A549 (cell line): ENCODE measurements at regions of chr11 and their contacts with region 1.

Region 1: GRCh38 chr11:61332797-61333549 is at the starts of genes DDB1 and TKFC:
- DNase-seq: peak; percentile 91 to 94
- ATAC-seq: peak; percentile 91 to 96
- H3K4me3 ChIP-seq: peak within 1 kb of the TSS; percentile 96
- H3K27ac ChIP-seq: peak within 1 kb of the TSS; percentile 93 to 96
- H3K4me1 ChIP-seq: peaks cover 35% of the 10 kb centered on the region
- CTCF ChIP-seq: no peak
- EP300 ChIP-seq: no peak
- POLR2A ChIP-seq: peak; percentile 88
- RAD21 ChIP-seq: no peak
- polyA plus RNA-seq, gene DDB1: 213 and 222 TPM in 2 replicates
- polyA plus RNA-seq, gene TKFC: 46.5 and 51.2 TPM in 2 replicates

Region 2: DNA sequence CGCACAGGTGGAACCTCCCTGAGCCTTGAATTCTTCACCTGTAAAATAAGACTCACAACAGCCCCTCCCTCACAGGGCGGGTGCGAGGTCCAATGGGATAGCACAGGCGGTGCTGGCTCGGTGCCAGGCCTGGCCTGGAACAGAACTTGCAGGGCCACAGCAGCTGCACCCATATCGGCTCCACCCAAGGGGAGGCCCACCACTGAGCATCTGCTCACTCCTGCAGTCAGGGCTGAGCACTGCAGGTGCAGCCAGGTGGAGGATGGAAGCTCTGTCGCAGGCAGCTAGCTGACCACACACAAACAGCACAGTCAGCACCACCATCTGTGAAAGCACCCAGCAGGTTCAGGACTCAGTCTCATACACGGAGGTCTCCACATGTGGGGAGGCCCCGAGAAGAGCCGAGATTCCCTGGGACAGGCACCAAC is 191.4 kb before region 1 on chr11:
- CTCF ChIA-PET with region 1: no interaction called
- POLR2A ChIA-PET with region 1: no interaction called
- DNase-seq: no peak
- ATAC-seq: peak; percentile 37 to 55; a peak in 4 of 6 replicates
- H3K4me3 ChIP-seq: no peak overlapping the region
- H3K27ac ChIP-seq: no peak overlapping the region
- H3K4me1 ChIP-seq: no peaks in the 10 kb centered on the region
- CTCF ChIP-seq: no peak
- EP300 ChIP-seq: no peak
- POLR2A ChIP-seq: no peak
- RAD21 ChIP-seq: no peak

Region 3: DNA sequence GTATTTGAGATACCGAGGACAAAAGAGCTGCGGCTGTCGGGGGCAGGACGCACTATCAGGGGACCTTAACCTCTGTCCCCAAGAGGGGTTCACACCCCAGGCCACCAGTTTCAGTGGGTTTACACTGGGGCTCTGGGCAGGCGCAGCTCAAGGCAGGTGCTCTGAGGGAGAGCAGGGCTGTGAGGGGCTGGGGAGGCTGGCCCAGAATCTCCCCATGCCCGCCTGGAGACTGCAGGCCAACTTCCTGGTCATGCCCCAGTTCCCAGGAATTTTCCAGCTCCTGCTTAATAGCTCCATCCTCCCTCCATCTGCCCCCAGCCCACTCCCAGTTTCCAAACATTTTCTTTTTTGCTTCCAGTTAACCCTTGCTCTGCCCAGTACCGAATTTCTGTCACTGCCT is 137.3 kb before region 1 on chr11:
- CTCF ChIA-PET with region 1: no interaction called
- POLR2A ChIA-PET with region 1: no interaction called
- DNase-seq: no peak
- ATAC-seq: peak; percentile 32 to 42; a peak in 3 of 6 replicates
- H3K4me3 ChIP-seq: no peak overlapping the region
- H3K27ac ChIP-seq: no peak overlapping the region
- H3K4me1 ChIP-seq: no peaks in the 10 kb centered on the region
- CTCF ChIP-seq: no peak
- EP300 ChIP-seq: no peak
- POLR2A ChIP-seq: no peak
- RAD21 ChIP-seq: no peak

Region 4: DNA sequence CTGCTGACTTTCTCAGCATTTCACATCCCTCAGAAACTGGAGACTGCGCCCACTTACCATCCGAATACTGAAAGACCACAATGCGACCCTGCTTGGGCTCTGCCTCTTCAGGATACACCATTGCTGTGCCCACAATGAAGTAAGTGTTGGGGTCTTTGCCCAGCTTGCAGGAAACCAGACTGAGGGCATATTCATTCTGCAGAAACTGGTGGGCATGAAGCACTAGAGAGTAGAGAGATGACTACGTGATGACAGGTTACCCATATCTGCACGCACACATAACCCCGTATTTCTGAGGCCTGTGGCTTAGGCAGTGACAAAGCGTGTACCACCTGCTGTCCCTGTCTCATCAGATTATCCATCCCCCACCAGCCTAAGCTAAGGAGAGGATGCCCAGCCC is 23.2 kb before region 1 on chr11:
- CTCF ChIA-PET with region 1: interaction called, 13 read pairs
- POLR2A ChIA-PET with region 1: no interaction called
- DNase-seq: no peak
- ATAC-seq: no peak
- H3K4me3 ChIP-seq: no peak overlapping the region
- H3K27ac ChIP-seq: no peak overlapping the region
- H3K4me1 ChIP-seq: no peaks in the 10 kb centered on the region
- CTCF ChIP-seq: no peak
- EP300 ChIP-seq: no peak
- POLR2A ChIP-seq: no peak
- RAD21 ChIP-seq: no peak

Region 5: GRCh38 chr11:61347916-61348461 is 15.0 kb after region 1 on chr11:
- CTCF ChIA-PET with region 1: interaction called, 368 read pairs
- POLR2A ChIA-PET with region 1: interaction called, 3 read pairs
- DNase-seq: no peak
- ATAC-seq: no peak
- H3K4me3 ChIP-seq: no peak overlapping the region
- H3K27ac ChIP-seq: no peak overlapping the region
- H3K4me1 ChIP-seq: no peaks in the 10 kb centered on the region
- CTCF ChIP-seq: no peak
- EP300 ChIP-seq: no peak
- POLR2A ChIP-seq: no peak
- RAD21 ChIP-seq: no peak

Region 6: GRCh38 chr11:61384271-61385242 is 51.6 kb after region 1 on chr11:
- CTCF ChIA-PET with region 1: interaction called, 552 read pairs
- POLR2A ChIA-PET with region 1: interaction called, 40 read pairs
- DNase-seq: peak in 1 of 2 experiments; percentile 66
- ATAC-seq: peak; percentile 72 to 76
- H3K4me3 ChIP-seq: no peak overlapping the region
- H3K27ac ChIP-seq: no peak overlapping the region
- H3K4me1 ChIP-seq: peaks cover 3% of the 10 kb centered on the region; the same call in 2 of the 3 replicates
- CTCF ChIP-seq: peak; percentile 17; the same call in 1 of the 3 replicates
- EP300 ChIP-seq: no peak
- POLR2A ChIP-seq: no peak
- RAD21 ChIP-seq: peak; percentile 28 to 54; a peak in 2 of 5 replicates

Region 7: GRCh38 chr11:61406067-61406466 is 73.1 kb after region 1 on chr11:
- CTCF ChIA-PET with region 1: interaction called, 15 read pairs
- POLR2A ChIA-PET with region 1: no interaction called
- DNase-seq: no peak
- ATAC-seq: no peak
- H3K4me3 ChIP-seq: no peak overlapping the region
- H3K27ac ChIP-seq: no peak overlapping the region
- H3K4me1 ChIP-seq: no peaks in the 10 kb centered on the region
- CTCF ChIP-seq: no peak
- EP300 ChIP-seq: no peak
- POLR2A ChIP-seq: no peak
- RAD21 ChIP-seq: no peak

Region 8: GRCh38 chr11:61446211-61446651 is 113.3 kb after region 1 on chr11:
- CTCF ChIA-PET with region 1: interaction called, 10 read pairs
- POLR2A ChIA-PET with region 1: no interaction called
- DNase-seq: peak; percentile 90
- ATAC-seq: peak; percentile 98 to 99
- H3K4me3 ChIP-seq: no peak overlapping the region
- H3K27ac ChIP-seq: peak overlapping the region; percentile 44 to 79; a peak in 5 of 6 replicates
- H3K4me1 ChIP-seq: peaks cover 12% of the 10 kb centered on the region
- CTCF ChIP-seq: peak; percentile 91
- EP300 ChIP-seq: no peak
- POLR2A ChIP-seq: no peak
- RAD21 ChIP-seq: peak; percentile 71 to 77